Naive thymus-derived CD4-positive, alpha-beta T cell (primary cell): ENCODE measurements at regions of chr22 and their contacts with region 1.

Region 1: GRCh38 chr22:31290494-31291471 is 1.5 kb downstream of the PIK3IP1 start:
- DNase-seq: peak; percentile 94 to 98 (median 97)
- ATAC-seq: peak; percentile 86
- H3K4me3 ChIP-seq: peak overlapping the region; percentile 100
- H3K4me3 Mint-ChIP-seq: peak overlapping the region; percentile 92 to 100 (median 98)
- H3K27ac ChIP-seq: peak overlapping the region; percentile 100
- H3K27ac Mint-ChIP-seq: peak overlapping the region; percentile 98 to 100 (median 99)
- H3K4me1 ChIP-seq: peaks cover 53 to 54% of the 10 kb centered on the region in 2 donors
- H3K4me1 Mint-ChIP-seq: peaks cover 24 to 65% (median 60%) of the 10 kb centered on the region in 7 donors
- H3K27me3 ChIP-seq: no peaks in the 10 kb centered on the region
- H3K27me3 Mint-ChIP-seq: no peaks in the 10 kb centered on the region

Region 2: GRCh38 chr22:30968924-30969539 is 321.8 kb before region 1 on chr22 and contains the start of gene TUG1:
- CTCF ChIA-PET with region 1: no interaction called
- POLR2A ChIA-PET with region 1: interaction called, 13 read pairs
- intact Hi-C with region 1: loop called (anchors 1 to 2 kb)
- DNase-seq: peak; percentile 88 to 98 (median 97)
- ATAC-seq: peak; percentile 96
- H3K4me3 ChIP-seq: peak within 1 kb of the TSS; percentile 59
- H3K4me3 Mint-ChIP-seq: peak within 1 kb of the TSS; percentile 90 to 96 (median 93)
- H3K27ac ChIP-seq: peak within 1 kb of the TSS; percentile 94
- H3K27ac Mint-ChIP-seq: peak within 1 kb of the TSS; percentile 90 to 98 (median 97)
- H3K4me1 ChIP-seq: peaks cover 22 to 23% of the 10 kb centered on the region in 2 donors
- H3K4me1 Mint-ChIP-seq: peaks cover 12 to 67% (median 58%) of the 10 kb centered on the region in 7 donors
- H3K27me3 ChIP-seq: no peaks in the 10 kb centered on the region
- H3K27me3 Mint-ChIP-seq: peaks cover 0 to 4% (median 0%) of the 10 kb centered on the region in 5 donors
- total RNA-seq, gene TUG1: 82.7 to 159 (median 113) TPM

Region 3: GRCh38 chr22:31160328-31160978 is 130.3 kb before region 1 on chr22:
- CTCF ChIA-PET with region 1: no interaction called
- POLR2A ChIA-PET with region 1: interaction called, 8 read pairs
- intact Hi-C with region 1: loop called in 1 of 2 experiments (anchors 2 kb)
- DNase-seq: peak in 3 of 9 donors; percentile 5 to 26 (median 9)
- ATAC-seq: peak; percentile 47
- H3K4me3 ChIP-seq: peak overlapping the region; percentile 76
- H3K4me3 Mint-ChIP-seq: peak overlapping the region; percentile 87 to 100 (median 99)
- H3K27ac ChIP-seq: peak overlapping the region; percentile 74
- H3K27ac Mint-ChIP-seq: peak overlapping the region; percentile 91 to 100 (median 97)
- H3K4me1 ChIP-seq: peaks cover 12 to 17% of the 10 kb centered on the region in 2 donors
- H3K4me1 Mint-ChIP-seq: peaks cover 25 to 42% (median 35%) of the 10 kb centered on the region in 7 donors
- H3K27me3 ChIP-seq: no peaks in the 10 kb centered on the region
- H3K27me3 Mint-ChIP-seq: peaks cover 0 to 13% (median 0%) of the 10 kb centered on the region in 5 donors

Region 4: DNA sequence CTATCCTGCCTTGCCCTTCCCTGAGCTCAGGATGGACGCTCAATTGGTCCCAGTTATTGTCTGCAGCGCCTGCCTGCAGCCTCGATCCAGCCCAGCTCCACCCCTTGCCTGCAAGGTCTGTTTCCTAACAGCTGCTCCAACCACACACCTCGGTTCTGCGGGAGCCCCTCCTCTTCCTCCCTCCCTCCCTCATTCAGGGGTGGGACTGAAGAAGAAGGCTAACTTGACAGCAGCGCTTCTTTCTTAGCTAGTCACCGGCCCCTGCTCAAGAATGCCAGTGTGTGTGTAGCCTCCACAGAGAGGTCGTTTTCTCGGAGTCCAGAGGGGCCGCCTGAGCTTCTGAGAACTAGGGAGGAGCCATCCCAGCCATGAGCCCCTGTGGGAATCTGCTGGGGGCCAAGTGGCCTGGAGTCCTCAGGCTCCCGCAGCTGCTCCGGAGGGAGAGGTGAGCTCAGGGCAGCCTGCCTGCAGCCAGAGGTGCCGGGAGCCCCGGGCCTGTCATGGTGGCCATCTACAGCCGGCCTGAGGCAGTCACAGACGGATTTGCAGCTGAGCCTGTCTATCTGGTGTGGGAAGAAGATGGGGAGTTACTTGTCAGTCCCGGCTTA is 42.5 kb before region 1 on chr22:
- CTCF ChIA-PET with region 1: no interaction called
- POLR2A ChIA-PET with region 1: interaction called, 38 read pairs
- intact Hi-C with region 1: no loop called
- DNase-seq: peak; percentile 33 to 78 (median 73)
- ATAC-seq: peak; percentile 100
- H3K4me3 ChIP-seq: no peak overlapping the region
- H3K4me3 Mint-ChIP-seq: peak overlapping the region; percentile 73 to 93 (median 83)
- H3K27ac ChIP-seq: no peak overlapping the region
- H3K27ac Mint-ChIP-seq: peak overlapping the region; percentile 20 to 87 (median 71)
- H3K4me1 ChIP-seq: peaks cover 9 to 17% of the 10 kb centered on the region in 2 donors
- H3K4me1 Mint-ChIP-seq: peaks cover 8 to 41% (median 28%) of the 10 kb centered on the region in 7 donors
- H3K27me3 ChIP-seq: no peaks in the 10 kb centered on the region
- H3K27me3 Mint-ChIP-seq: no peaks in the 10 kb centered on the region

Region 5: GRCh38 chr22:31308181-31308580 is 17.4 kb after region 1 on chr22:
- CTCF ChIA-PET with region 1: interaction called, 33 read pairs
- POLR2A ChIA-PET with region 1: interaction called, 2,331 read pairs
- intact Hi-C with region 1: loop called (anchors 1 kb)
- DNase-seq: peak in 1 of 9 donors; percentile 20
- ATAC-seq: peak; percentile 37
- H3K4me3 ChIP-seq: no peak overlapping the region
- H3K4me3 Mint-ChIP-seq: peak overlapping the region in 9 of 10 donors; percentile 2 to 73 (median 55)
- H3K27ac ChIP-seq: peak overlapping the region; percentile 39
- H3K27ac Mint-ChIP-seq: peak overlapping the region; percentile 13 to 86 (median 77)
- H3K4me1 ChIP-seq: peaks cover 7 to 24% of the 10 kb centered on the region in 2 donors
- H3K4me1 Mint-ChIP-seq: peaks cover 19 to 63% (median 40%) of the 10 kb centered on the region in 7 donors
- H3K27me3 ChIP-seq: no peaks in the 10 kb centered on the region
- H3K27me3 Mint-ChIP-seq: no peaks in the 10 kb centered on the region

Region 6: DNA sequence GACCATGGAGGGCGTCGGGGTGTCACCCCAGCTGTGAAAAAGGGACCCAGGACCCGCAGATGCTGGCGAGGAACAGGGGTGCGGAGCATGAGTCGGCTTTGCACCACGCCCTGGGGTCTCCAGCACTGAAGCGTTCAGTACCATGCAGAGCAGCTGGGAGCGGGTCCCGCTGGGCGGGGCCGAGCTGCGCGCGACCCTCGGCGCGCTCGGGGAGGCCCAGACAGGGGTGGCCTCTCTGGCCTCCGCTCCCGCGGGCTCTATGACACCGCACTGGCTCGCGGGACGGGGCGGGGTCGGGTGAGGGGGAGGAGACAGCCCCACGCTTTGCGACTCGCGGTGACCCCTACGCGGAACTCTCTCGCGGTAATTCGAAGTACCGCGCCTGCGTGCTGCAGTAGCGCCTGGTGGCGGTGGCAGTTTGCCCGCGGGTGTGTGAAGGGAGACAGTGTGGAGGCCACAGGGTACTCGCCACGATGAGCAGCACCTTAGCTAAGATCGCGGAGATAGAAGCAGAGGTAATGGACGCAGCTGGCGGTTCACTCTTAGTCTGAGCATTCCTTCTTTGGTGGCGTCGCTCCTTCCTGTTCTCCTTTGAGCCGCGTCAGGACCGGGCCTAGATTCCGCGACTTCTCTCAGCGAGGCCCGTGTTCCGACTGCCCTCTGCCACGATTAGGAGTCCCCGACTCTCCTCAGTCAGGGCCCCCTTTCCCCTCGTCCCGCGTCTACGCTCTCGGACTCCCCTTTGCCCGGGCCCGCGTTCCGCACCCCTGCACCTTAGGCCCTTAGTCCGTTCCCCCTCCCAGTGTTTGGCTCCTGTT is 108.6 kb after region 1 on chr22 and contains the start of gene DRG1:
- CTCF ChIA-PET with region 1: no interaction called
- POLR2A ChIA-PET with region 1: interaction called, 6 read pairs
- intact Hi-C with region 1: loop called (anchors 2 to 5 kb)
- DNase-seq: peak; percentile 90 to 98 (median 93)
- ATAC-seq: peak; percentile 99
- H3K4me3 ChIP-seq: peak within 1 kb of the TSS; percentile 88
- H3K4me3 Mint-ChIP-seq: peak within 1 kb of the TSS; percentile 92 to 99 (median 96)
- H3K27ac ChIP-seq: peak within 1 kb of the TSS; percentile 91
- H3K27ac Mint-ChIP-seq: peak within 1 kb of the TSS; percentile 85 to 97 (median 94)
- H3K4me1 ChIP-seq: peaks cover 10 to 15% of the 10 kb centered on the region in 2 donors
- H3K4me1 Mint-ChIP-seq: peaks cover 5 to 35% (median 22%) of the 10 kb centered on the region in 7 donors
- H3K27me3 ChIP-seq: no peaks in the 10 kb centered on the region
- H3K27me3 Mint-ChIP-seq: no peaks in the 10 kb centered on the region
- total RNA-seq, gene DRG1: 53.3 to 109 (median 84.4) TPM

Region 7: DNA sequence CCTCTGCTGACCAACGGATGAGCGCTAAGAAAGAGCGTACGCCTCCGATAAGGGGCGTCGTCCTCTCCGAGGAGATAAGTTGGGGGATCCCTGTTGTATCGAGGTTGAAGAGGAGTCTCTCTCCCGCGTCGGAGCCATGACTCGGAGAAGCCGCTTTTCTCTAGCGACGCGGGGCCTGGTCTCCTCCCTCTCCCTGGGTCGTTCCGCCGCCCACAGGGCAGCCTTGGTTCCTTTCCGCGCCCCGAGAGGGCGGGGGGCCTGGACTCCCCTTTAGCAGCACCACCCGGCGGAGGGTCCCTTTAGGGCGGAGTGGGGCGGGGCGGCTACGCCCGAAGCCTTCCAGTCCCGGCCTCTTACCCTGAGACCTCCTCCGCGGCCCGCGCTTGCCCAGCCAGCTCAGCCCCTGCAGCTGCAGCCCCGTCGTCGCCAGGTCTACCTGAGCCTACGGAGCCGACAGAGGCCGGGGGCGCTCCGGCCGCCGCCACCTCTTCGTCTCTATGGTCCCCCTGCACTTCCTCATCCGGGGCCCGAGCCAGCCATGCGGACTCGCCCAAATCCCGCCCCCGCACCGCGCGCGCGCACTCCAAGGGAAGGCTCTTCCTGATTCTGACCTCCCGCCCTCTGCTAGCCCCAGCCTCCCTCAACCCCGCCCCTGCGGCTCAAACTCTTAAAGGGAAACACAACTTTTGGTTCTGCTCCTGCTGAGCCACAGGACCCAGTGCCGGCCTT is 459.0 kb after region 1 on chr22 and contains the start of gene PRR14L:
- CTCF ChIA-PET with region 1: no interaction called
- POLR2A ChIA-PET with region 1: interaction called, 5 read pairs
- intact Hi-C with region 1: loop called (anchors 5 kb)
- DNase-seq: peak; percentile 94 to 100 (median 98)
- ATAC-seq: peak; percentile 86
- H3K4me3 ChIP-seq: peak within 1 kb of the TSS; percentile 92
- H3K4me3 Mint-ChIP-seq: peak within 1 kb of the TSS; percentile 87 to 97 (median 94)
- H3K27ac ChIP-seq: peak within 1 kb of the TSS; percentile 83
- H3K27ac Mint-ChIP-seq: peak within 1 kb of the TSS; percentile 82 to 98 (median 96)
- H3K4me1 ChIP-seq: peaks cover 31 to 37% of the 10 kb centered on the region in 2 donors
- H3K4me1 Mint-ChIP-seq: peaks cover 36 to 65% (median 59%) of the 10 kb centered on the region in 7 donors
- H3K27me3 ChIP-seq: no peaks in the 10 kb centered on the region
- H3K27me3 Mint-ChIP-seq: peaks cover 0 to 2% (median 0%) of the 10 kb centered on the region in 5 donors
- total RNA-seq, gene PRR14L: 43.1 to 82.6 (median 66.9) TPM